Activated CD4-positive, alpha-beta memory T cell treated with anti-CD3 and anti-CD28 coated beads, Interleukin-2, amount 10 ng/mL, durations not matched to agents 7 days and 5 days (primary cell): ENCODE measurements at regions of chr10 and their contacts with region 1.

Region 1: GRCh38 chr10:121974535-121975294 is at the start of gene NSMCE4A:
- DNase-seq: peak; percentile 74
- H3K4me3 Mint-ChIP-seq: peak within 1 kb of the TSS; percentile 77
- H3K27ac Mint-ChIP-seq: peak within 1 kb of the TSS; percentile 71
- H3K4me1 Mint-ChIP-seq: peaks cover 24% of the 10 kb centered on the region
- H3K27me3 Mint-ChIP-seq: no peaks in the 10 kb centered on the region
- total RNA-seq, gene NSMCE4A: 54.0 to 54.7 TPM

Region 2: GRCh38 chr10:121684276-121684675 is 290.4 kb before region 1 on chr10:
- CTCF ChIA-PET with region 1: no interaction called
- POLR2A ChIA-PET with region 1: no interaction called
- DNase-seq: no peak
- H3K4me3 Mint-ChIP-seq: no peak overlapping the region
- H3K27ac Mint-ChIP-seq: no peak overlapping the region
- H3K4me1 Mint-ChIP-seq: no peaks in the 10 kb centered on the region
- H3K27me3 Mint-ChIP-seq: peaks cover 4% of the 10 kb centered on the region

Region 3: GRCh38 chr10:121927841-121928527 is 46.7 kb before region 1 on chr10 and contains the start of gene ATE1:
- CTCF ChIA-PET with region 1: interaction called, 3 read pairs
- POLR2A ChIA-PET with region 1: interaction called, 26 read pairs
- DNase-seq: peak; percentile 85
- H3K4me3 Mint-ChIP-seq: peak within 1 kb of the TSS; percentile 81
- H3K27ac Mint-ChIP-seq: peak within 1 kb of the TSS; percentile 92
- H3K4me1 Mint-ChIP-seq: peaks cover 30% of the 10 kb centered on the region
- H3K27me3 Mint-ChIP-seq: no peaks in the 10 kb centered on the region
- total RNA-seq, gene ATE1: 22.1 to 22.9 TPM